Activated CD8-positive, alpha-beta T cell treated with anti-CD3 and anti-CD28 coated beads, Interleukin-2, amount 10 ng/mL, durations not matched to agents 7 days and 5 days (primary cell): ENCODE measurements at regions of chr14 and their contacts with region 1.

Region 1: DNA sequence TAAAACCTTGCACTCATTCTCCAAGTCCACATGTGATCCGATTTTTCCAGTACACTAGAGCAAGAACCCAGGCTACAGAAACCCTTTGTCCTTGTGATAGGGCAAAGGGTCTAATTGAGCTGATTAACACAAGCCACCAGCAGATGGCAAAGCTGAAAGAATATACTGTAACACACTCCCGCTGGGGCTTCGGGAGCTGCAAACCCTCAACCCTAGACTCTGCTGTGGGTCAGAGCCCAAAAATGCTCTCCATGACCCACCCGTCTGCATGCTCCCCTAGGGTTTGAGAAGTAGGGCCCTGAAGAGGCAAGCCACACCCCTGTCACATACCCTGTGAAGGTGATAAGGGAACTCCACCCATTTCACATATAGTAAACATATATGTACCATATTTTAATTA is 33.6 kb upstream of the PCNX1 start:
- DNase-seq: peak; percentile 36
- ATAC-seq: peak; percentile 17
- H3K4me3 Mint-ChIP-seq: no peak overlapping the region
- H3K27ac Mint-ChIP-seq: peak overlapping the region; percentile 55
- H3K4me1 Mint-ChIP-seq: peaks cover 36% of the 10 kb centered on the region
- H3K27me3 Mint-ChIP-seq: no peaks in the 10 kb centered on the region

Region 2: GRCh38 chr14:70789361-70789760 is 84.3 kb before region 1 on chr14:
- CTCF ChIA-PET with region 1: no interaction called
- POLR2A ChIA-PET with region 1: no interaction called
- DNase-seq: no peak
- ATAC-seq: no peak
- H3K4me3 Mint-ChIP-seq: no peak overlapping the region
- H3K27ac Mint-ChIP-seq: no peak overlapping the region
- H3K4me1 Mint-ChIP-seq: no peaks in the 10 kb centered on the region
- H3K27me3 Mint-ChIP-seq: no peaks in the 10 kb centered on the region

Region 3: GRCh38 chr14:70887207-70887681 is 13.6 kb after region 1 on chr14:
- CTCF ChIA-PET with region 1: interaction called, 78 read pairs
- POLR2A ChIA-PET with region 1: interaction called, 16 read pairs
- DNase-seq: no peak
- ATAC-seq: peak; percentile 28
- H3K4me3 Mint-ChIP-seq: peak overlapping the region; percentile 64
- H3K27ac Mint-ChIP-seq: peak overlapping the region; percentile 92
- H3K4me1 Mint-ChIP-seq: peaks cover 97% of the 10 kb centered on the region
- H3K27me3 Mint-ChIP-seq: no peaks in the 10 kb centered on the region

Region 4: DNA sequence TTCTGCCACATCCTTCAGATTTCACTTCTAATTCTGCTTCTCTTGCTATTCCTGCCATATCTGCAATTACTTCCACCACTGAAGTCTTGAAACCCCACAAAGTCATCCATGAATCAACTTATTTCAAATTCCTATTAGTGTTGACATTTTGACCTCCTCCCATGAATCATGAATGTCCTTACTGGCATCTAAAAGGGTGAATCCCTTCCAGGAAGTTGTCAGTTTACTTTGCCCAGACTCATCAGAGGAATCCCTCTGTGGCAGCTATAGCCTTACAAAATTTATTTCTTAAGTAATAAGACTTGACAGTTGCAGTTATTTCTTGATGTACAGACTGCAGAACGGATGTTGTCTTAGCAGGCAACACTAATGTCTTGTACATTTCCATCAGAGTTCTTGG is 196.5 kb after region 1 on chr14:
- CTCF ChIA-PET with region 1: no interaction called
- POLR2A ChIA-PET with region 1: no interaction called
- DNase-seq: no peak
- ATAC-seq: no peak
- H3K4me3 Mint-ChIP-seq: no peak overlapping the region
- H3K27ac Mint-ChIP-seq: no peak overlapping the region
- H3K4me1 Mint-ChIP-seq: peaks cover 13% of the 10 kb centered on the region
- H3K27me3 Mint-ChIP-seq: no peaks in the 10 kb centered on the region